ENCODE measurements at regions of chr10 and their contacts with region 1.

Region 1: GRCh38 chr10:78886129-78886528 is 182.6 kb upstream of the ZMIZ1 start:
- DNase-seq: no peak
- H3K4me3 ChIP-seq: no peak overlapping the region
- H3K27ac ChIP-seq: no peak overlapping the region
- H3K4me1 ChIP-seq: no peaks in the 10 kb centered on the region
- H3K27me3 ChIP-seq: no peaks in the 10 kb centered on the region
- CTCF ChIP-seq: no peak
- POLR2A ChIP-seq: no peak

Region 2: GRCh38 chr10:78869508-78870454 is 16.3 kb before region 1 on chr10:
- intact Hi-C with region 1: loop called (anchors 2 kb)
- DNase-seq: peak in 1 of 2 donors; percentile 52
- H3K4me3 ChIP-seq: no peak overlapping the region
- H3K27ac ChIP-seq: no peak overlapping the region
- H3K4me1 ChIP-seq: no peaks in the 10 kb centered on the region
- H3K27me3 ChIP-seq: no peaks in the 10 kb centered on the region
- CTCF ChIP-seq: no peak
- POLR2A ChIP-seq: no peak

Region 3: GRCh38 chr10:78931321-78932053 is 45.4 kb after region 1 on chr10:
- intact Hi-C with region 1: no loop called
- DNase-seq: peak in 1 of 2 donors; percentile 93
- H3K4me3 ChIP-seq: no peak overlapping the region
- H3K27ac ChIP-seq: peak overlapping the region; percentile 66
- H3K4me1 ChIP-seq: peaks cover 39% of the 10 kb centered on the region
- H3K27me3 ChIP-seq: no peaks in the 10 kb centered on the region
- CTCF ChIP-seq: no peak
- POLR2A ChIP-seq: no peak

Measured in vagina (tissue), 2 donors.